ENCODE measurements at regions of chr1 and their contacts with region 1.

Region 1: DNA sequence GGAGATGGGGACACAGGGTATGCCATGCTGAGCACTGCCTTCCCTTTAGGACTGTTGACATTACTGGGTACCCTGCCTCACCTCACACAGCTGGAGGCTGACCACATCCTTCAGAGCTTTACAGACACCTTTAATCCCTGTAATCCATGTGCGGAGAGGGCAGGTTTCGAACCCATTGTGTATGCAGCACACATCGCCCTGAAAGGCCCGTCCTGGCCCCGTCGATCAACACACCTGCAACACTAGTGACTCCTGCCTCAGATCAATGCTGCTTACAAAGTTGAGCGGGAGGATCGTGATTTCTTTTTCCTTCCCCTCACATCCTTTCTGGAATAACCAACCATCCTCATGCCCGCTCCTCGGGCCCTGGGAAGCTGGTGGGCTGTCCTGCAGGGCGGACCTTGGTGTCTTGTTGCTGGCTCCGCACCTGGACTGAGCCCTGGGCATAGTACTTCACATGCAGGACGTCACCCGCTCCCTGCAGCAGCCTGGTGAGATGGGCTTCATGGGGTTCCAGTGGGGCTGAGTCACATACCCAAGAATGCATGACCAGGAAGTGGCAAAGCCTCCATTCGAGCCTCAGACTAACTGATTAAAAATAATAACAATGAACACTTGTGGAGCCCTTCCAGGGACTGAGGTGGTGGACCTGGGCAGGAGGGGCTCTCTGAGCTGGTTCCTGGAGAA is 403.6 kb downstream of the PTPRU start:
- DNase-seq: peak; percentile 66

Region 2: DNA sequence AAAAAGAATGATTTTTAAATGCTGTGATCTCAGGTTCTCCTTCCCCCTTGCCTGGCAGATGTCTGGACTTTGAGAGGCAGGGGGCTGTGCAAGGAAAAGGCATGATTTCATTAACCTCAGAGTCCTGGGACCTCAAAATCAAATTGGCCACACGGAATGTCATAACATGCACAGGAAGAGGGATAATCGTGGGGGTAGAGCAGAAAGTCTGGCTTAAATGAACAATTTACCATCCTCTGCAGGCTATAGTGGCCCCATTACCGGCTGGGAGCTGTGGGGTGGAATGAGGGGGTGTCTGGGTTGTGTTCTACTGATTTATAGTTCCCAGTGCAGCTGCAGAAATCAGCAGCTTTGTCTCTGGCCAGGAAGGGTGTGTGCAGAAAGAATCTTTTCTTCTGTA is 817.1 kb before region 1 on chr1:
- intact Hi-C with region 1: loop called in 1 of 2 experiments (anchors 5 kb)
- DNase-seq: no peak